Heart right ventricle (tissue), 16 donors: ENCODE measurements at regions of chr9 and their contacts with region 1.

Region 1: DNA sequence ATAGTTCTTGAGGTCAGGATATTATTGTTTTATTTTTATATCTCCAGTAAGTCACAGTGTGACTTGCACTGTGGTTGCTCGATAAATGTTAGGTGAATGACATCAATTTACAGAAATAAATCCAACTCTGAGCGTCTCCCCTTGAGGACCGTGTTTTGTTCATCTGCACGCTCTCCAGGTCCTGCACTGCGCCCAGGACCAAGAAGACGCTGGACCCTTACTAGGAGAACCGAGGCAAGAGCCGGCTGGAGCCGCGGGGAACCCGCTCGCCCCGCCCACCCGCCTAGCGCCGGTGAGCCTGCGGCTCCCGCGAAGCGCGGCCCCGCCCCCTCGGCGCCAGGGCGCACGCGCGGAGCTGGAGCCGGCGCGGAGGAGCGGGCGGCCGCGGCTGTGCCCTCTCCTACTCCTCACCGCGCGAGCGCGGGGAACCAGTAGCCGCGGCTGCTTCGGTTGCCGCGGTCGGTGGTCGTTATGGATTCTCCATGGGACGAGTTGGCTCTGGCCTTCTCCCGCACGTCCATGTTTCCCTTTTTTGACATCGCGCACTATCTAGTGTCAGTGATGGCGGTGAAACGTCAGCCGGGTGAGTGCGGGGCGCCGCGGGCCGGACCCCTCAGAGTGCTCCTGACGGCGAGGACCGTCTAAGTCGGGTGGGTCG is at the start of gene TMEM38B:
- DNase-seq: peak; percentile 75 to 84
- ATAC-seq: peak; percentile 95 to 99 (median 98)
- H3K4me3 ChIP-seq: peak within 1 kb of the TSS; percentile 66 to 97 (median 82)
- H3K27ac ChIP-seq: peak within 1 kb of the TSS; percentile 37 to 88 (median 80)
- H3K4me1 ChIP-seq: peaks cover 0 to 46% (median 23%) of the 10 kb centered on the region in 9 donors
- H3K27me3 ChIP-seq: peaks cover 0 to 37% (median 25%) of the 10 kb centered on the region in 7 donors
- CTCF ChIP-seq: no peak
- total RNA-seq, gene TMEM38B: 49.1 to 68.4 (median 55.2) TPM

Region 2: GRCh38 chr9:104494808-104495207 is 1199.5 kb before region 1 on chr9:
- intact Hi-C with region 1: loop called in 1 of 10 experiments (anchors 5 kb)
- DNase-seq: no peak
- ATAC-seq: no peak
- H3K4me3 ChIP-seq: no peak overlapping the region
- H3K27ac ChIP-seq: no peak overlapping the region
- H3K4me1 ChIP-seq: no peaks in the 10 kb centered on the region
- H3K27me3 ChIP-seq: no peaks in the 10 kb centered on the region
- CTCF ChIP-seq: peak in 5 of 9 donors; percentile 14 to 38 (median 21)

Region 3: DNA sequence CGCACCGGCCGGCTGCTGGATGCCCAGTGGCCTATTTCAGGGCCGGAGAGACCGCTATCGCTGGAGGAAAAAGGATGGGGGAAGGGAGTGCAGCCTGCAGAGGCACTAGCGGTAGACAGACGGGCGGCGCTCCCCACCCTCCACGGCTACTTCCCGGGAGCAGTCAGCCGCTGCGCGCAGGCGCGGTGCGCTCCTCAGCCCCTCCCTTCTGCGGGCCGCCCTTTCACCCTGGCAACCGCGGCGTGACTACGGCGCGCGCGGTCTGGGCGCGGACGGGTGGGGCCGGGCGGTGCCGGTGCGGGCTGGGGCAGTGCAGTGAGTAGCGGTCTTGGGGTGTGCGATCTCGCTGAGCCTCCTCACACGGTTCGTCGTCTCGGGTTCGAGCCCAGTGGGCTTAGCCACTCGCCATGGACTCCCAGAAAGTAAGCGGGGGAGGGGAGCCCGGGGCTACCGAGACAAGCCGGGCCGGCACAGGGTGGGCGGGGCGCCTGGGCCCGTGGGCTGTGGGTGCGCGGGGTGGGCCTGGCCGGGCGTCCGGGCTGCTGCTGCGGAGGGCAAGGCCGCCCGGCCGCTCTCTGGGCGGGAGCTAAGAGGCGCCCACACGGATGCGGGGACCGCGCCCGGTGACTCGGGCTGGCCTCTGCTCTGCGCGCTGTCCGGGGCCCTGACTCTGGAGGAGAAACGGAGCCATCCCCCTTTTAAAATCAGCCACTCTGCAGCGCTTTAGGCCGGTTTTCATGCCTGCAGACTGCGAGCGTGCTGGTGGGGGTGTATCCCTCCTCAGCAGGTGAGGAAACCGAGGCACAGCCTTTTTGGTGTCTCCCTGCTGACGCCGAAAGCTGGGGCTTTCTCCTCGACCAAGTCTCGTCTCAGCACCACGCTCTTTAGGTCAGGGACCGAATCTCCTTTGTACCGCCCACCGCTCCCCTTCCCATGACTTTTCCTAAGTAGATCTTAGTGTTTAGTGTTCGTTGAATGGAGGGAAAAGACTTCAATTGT is 246.2 kb before region 1 on chr9 and contains the start of gene FSD1L:
- intact Hi-C with region 1: loop called in 1 of 10 experiments (anchors 10 kb)
- DNase-seq: peak; percentile 92 to 96
- ATAC-seq: peak; percentile 96 to 98 (median 97)
- H3K4me3 ChIP-seq: peak within 1 kb of the TSS; percentile 58 to 92 (median 76)
- H3K27ac ChIP-seq: peak within 1 kb of the TSS; percentile 57 to 89 (median 78)
- H3K4me1 ChIP-seq: peaks cover 0 to 50% (median 26%) of the 10 kb centered on the region in 9 donors
- H3K27me3 ChIP-seq: no peaks in the 10 kb centered on the region
- CTCF ChIP-seq: peak in 8 of 9 donors; percentile 9 to 65 (median 42)
- total RNA-seq, gene FSD1L: 4.2 to 16.3 (median 8.8) TPM

Region 4: DNA sequence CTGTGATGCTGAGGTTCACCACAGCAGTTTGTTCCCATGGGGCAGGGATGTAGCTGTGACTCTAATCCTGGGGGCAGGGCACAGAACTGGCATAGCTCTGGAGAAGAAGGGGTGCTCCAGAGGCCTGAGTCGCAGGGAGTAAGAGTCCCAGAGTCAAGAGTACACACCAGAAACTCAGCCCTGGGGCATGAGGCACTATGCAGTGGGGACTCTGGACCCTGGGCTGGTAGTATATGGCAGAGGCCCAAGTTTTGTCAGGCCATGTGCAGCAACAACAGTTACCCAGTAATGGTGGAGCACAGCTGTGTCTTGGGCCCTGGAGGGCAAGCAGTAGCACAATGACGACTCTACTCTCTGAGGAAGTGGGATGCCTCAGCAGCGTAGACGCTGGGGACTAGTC is 42.9 kb after region 1 on chr9:
- intact Hi-C with region 1: no loop called
- DNase-seq: no peak
- ATAC-seq: peak in 1 of 8 donors; percentile 34
- H3K4me3 ChIP-seq: no peak overlapping the region
- H3K27ac ChIP-seq: no peak overlapping the region
- H3K4me1 ChIP-seq: no peaks in the 10 kb centered on the region
- H3K27me3 ChIP-seq: no peaks in the 10 kb centered on the region
- CTCF ChIP-seq: no peak